Stomach (tissue), 19 donors: ENCODE measurements at regions of chr9 and their contacts with region 1.

Region 1: DNA sequence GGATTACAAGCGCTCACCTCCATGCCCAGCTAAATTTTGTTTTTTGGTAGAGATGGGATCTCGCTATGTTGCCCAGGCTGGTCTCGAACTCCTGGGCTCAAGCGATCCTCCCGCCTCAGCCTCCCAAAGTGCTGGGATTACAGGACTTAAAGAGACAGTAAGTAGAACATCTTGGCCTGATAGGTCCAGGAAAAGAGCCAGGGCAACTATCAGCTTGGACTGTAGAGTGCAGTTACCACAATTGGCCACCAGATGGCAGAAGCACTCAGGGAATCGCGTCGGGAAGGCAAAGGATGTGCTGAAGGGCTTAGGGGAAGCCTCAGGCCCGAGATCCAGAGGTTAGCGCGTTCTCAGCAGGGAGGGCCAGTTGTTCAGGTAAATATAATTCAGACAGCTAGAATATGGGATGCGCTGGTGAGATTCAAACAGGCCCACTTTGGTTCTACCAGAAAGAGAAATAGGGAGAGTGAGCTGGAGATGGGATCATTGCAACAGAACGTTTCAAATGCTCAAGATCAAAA is 21.5 kb downstream of the C9orf57 start:
- DNase-seq: peak; percentile 82 to 91
- H3K4me3 ChIP-seq: no peak overlapping the region
- H3K27ac ChIP-seq: no peak overlapping the region
- H3K4me1 ChIP-seq: peaks cover 0 to 29% (median 7%) of the 10 kb centered on the region in 4 donors
- H3K27me3 ChIP-seq: no peaks in the 10 kb centered on the region
- CTCF ChIP-seq: peak in 6 of 7 experiments; percentile 95 to 98 (median 97)
- EP300 ChIP-seq: no peak
- POLR2A ChIP-seq: no peak

Region 2: GRCh38 chr9:72102520-72102919 is 63.6 kb after region 1 on chr9:
- intact Hi-C with region 1: no loop called
- DNase-seq: no peak
- H3K4me3 ChIP-seq: no peak overlapping the region
- H3K27ac ChIP-seq: no peak overlapping the region
- H3K4me1 ChIP-seq: no peaks in the 10 kb centered on the region
- H3K27me3 ChIP-seq: no peaks in the 10 kb centered on the region
- CTCF ChIP-seq: no peak
- EP300 ChIP-seq: no peak
- POLR2A ChIP-seq: no peak

Region 3: DNA sequence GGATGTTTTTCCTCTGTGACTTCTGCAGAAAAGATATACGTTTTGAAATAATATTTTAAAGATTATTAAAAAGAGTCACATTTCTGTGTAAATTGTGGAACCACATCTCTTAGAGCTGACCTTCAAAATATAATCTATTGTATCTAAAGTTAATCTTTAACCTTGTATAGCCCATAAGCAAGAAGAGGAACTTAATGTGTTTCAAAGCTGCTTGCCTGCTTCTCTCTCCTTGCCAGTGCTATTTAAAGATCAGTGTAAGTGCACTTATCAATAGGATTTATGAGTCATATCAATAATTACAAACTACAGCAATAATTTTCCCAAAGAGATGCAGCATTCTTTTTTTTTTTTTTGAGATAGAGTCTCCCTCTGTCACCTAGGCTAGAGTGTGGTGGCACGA is 80.9 kb after region 1 on chr9:
- intact Hi-C with region 1: no loop called
- DNase-seq: no peak
- H3K4me3 ChIP-seq: no peak overlapping the region
- H3K27ac ChIP-seq: no peak overlapping the region
- H3K4me1 ChIP-seq: no peaks in the 10 kb centered on the region
- H3K27me3 ChIP-seq: no peaks in the 10 kb centered on the region
- CTCF ChIP-seq: no peak
- EP300 ChIP-seq: no peak
- POLR2A ChIP-seq: no peak

Region 4: DNA sequence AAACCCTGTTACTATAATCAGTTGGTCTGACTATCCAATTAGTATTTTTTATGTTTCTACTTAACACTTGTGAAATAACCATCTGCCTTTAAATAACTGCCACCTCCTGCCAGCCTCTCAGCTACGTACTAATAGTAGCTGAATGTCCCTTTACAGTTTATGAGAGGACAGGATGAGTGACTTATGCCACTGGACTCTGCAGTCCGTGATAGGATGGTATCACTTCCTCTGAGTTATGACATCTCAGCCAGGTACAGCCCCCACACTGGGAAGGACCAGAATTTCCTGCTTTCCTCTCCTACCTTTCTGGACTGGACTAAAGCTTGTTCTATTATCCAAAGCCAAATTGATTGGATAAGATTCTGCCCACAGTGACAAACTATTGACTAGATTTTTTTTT is 223.1 kb after region 1 on chr9:
- intact Hi-C with region 1: loop called (anchors 5 kb)
- DNase-seq: no peak
- H3K4me3 ChIP-seq: no peak overlapping the region
- H3K27ac ChIP-seq: no peak overlapping the region
- H3K4me1 ChIP-seq: no peaks in the 10 kb centered on the region
- H3K27me3 ChIP-seq: peaks cover 0 to 5% (median 0%) of the 10 kb centered on the region in 3 donors
- CTCF ChIP-seq: no peak
- EP300 ChIP-seq: no peak
- POLR2A ChIP-seq: no peak

Region 5: GRCh38 chr9:72271613-72272478 is 232.9 kb after region 1 on chr9:
- intact Hi-C with region 1: loop called (anchors 5 kb)
- DNase-seq: peak; percentile 37 to 80
- H3K4me3 ChIP-seq: no peak overlapping the region
- H3K27ac ChIP-seq: no peak overlapping the region
- H3K4me1 ChIP-seq: no peaks in the 10 kb centered on the region
- H3K27me3 ChIP-seq: no peaks in the 10 kb centered on the region
- CTCF ChIP-seq: peak in 5 of 7 experiments; percentile 35 to 86 (median 75)
- EP300 ChIP-seq: no peak
- POLR2A ChIP-seq: no peak